Colonic mucosa (tissue), 4 donors: ENCODE measurements at regions of chr2 and their contacts with region 1.

Region 1: DNA sequence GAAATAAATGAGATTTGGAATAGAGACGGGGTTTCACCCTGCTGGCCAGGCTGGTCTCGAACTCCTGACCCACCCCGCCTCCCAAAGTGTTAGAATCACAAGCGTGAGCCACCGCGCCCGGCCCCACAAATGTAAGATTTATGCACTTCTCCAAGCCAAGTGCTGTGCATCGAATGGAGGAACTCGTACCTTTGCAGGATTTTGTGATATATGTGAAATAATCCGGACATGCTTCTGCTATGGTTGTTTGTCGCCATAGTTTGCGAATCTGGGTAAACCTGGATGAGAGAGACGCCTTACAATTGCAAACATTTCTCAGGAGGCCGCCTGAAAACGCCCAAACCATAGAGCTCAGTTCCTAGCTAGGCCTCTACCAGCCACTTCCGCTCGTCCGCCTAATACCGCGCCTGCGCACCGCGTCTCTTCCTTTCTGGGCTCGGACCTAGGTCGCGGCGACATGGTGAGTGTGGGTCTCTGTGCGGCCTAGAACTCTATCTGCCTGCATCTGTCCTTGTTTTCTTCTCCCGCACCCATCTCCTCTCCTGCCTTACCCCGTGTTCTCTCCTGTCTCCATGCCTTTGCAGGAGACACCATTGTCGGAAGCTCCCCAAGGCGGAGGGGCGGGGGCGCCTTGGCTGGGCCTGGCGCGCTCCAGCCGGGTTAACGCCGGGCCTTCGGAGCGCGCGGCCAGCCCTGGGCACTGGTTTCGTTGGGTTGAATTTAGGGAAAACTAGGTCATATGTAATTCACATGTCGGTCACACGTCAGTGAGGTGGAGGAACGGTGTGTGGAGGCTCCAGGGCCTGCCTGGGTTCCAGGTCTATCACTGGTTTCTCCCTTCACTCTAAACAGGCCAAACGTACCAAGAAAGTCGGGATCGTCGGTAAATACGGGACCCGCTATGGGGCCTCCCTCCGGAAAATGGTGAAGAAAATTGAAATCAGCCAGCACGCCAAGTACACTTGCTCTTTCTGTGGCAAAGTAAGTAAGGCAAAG is at the start of gene RPL37A:
- DNase-seq: peak; percentile 96
- H3K4me3 ChIP-seq: peak within 1 kb of the TSS; percentile 88
- H3K27ac ChIP-seq: peak within 1 kb of the TSS; percentile 81
- H3K4me1 ChIP-seq: peaks cover 18% of the 10 kb centered on the region
- H3K27me3 ChIP-seq: no peaks in the 10 kb centered on the region
- CTCF ChIP-seq: no peak
- total RNA-seq, gene RPL37A: 1,895 to 2,156 TPM

Region 2: GRCh38 chr2:216151313-216152030 is 347.2 kb before region 1 on chr2:
- intact Hi-C with region 1: no loop called
- DNase-seq: no peak
- H3K4me3 ChIP-seq: no peak overlapping the region
- H3K27ac ChIP-seq: no peak overlapping the region
- H3K4me1 ChIP-seq: no peaks in the 10 kb centered on the region
- H3K27me3 ChIP-seq: no peaks in the 10 kb centered on the region
- CTCF ChIP-seq: no peak

Region 3: GRCh38 chr2:216339808-216340631 is 158.7 kb before region 1 on chr2:
- intact Hi-C with region 1: no loop called
- DNase-seq: peak; percentile 21
- H3K4me3 ChIP-seq: no peak overlapping the region
- H3K27ac ChIP-seq: no peak overlapping the region
- H3K4me1 ChIP-seq: no peaks in the 10 kb centered on the region
- H3K27me3 ChIP-seq: no peaks in the 10 kb centered on the region
- CTCF ChIP-seq: no peak

Region 4: DNA sequence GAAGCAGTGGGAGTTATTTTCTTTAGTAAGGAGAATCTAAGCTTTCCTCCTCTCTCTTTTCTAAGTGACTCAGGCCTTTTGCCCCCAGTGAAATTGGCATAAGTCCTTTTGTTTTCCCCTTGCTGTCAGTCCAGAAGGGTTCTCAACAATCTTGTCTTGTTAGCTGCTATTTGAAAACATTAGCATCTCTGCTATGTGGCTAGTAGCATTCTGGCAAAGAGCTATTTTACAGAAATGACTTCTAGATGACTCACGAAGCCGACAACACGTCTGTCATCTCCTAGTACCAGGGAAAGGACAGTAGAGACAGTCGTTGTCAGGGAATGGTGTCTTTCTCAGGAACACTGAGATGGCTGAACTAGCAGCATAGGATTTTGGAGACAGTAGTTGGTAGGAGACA is 71.8 kb before region 1 on chr2:
- intact Hi-C with region 1: loop called (anchors 10 kb)
- DNase-seq: no peak
- H3K4me3 ChIP-seq: no peak overlapping the region
- H3K27ac ChIP-seq: no peak overlapping the region
- H3K4me1 ChIP-seq: no peaks in the 10 kb centered on the region
- H3K27me3 ChIP-seq: no peaks in the 10 kb centered on the region
- CTCF ChIP-seq: no peak